Right lobe of liver (tissue), 6 donors: ENCODE measurements at regions of chr11 and their contacts with region 1.

Region 1: GRCh38 chr11:119666463-119667131 is 62.4 kb downstream of the NECTIN1 start:
- DNase-seq: peak; percentile 84 to 87 (median 86)
- ATAC-seq: peak; percentile 97 to 99 (median 99)
- H3K4me3 ChIP-seq: no peak overlapping the region
- H3K27ac ChIP-seq: no peak overlapping the region
- H3K4me1 ChIP-seq: no peaks in the 10 kb centered on the region
- H3K27me3 ChIP-seq: no peaks in the 10 kb centered on the region
- CTCF ChIP-seq: peak; percentile 95 to 99 (median 98)
- POLR2A ChIP-seq: no peak

Region 2: GRCh38 chr11:119481021-119481666 is 185.5 kb before region 1 on chr11:
- intact Hi-C with region 1: loop called in 1 of 2 experiments (anchors 10 kb)
- DNase-seq: peak; percentile 80 to 84 (median 82)
- ATAC-seq: peak; percentile 93 to 99 (median 96)
- H3K4me3 ChIP-seq: no peak overlapping the region
- H3K27ac ChIP-seq: no peak overlapping the region
- H3K4me1 ChIP-seq: peaks cover 0 to 3% (median 0%) of the 10 kb centered on the region in 4 donors
- H3K27me3 ChIP-seq: no peaks in the 10 kb centered on the region
- CTCF ChIP-seq: peak in 3 of 4 donors; percentile 97 to 99 (median 99)
- POLR2A ChIP-seq: no peak

Region 3: DNA sequence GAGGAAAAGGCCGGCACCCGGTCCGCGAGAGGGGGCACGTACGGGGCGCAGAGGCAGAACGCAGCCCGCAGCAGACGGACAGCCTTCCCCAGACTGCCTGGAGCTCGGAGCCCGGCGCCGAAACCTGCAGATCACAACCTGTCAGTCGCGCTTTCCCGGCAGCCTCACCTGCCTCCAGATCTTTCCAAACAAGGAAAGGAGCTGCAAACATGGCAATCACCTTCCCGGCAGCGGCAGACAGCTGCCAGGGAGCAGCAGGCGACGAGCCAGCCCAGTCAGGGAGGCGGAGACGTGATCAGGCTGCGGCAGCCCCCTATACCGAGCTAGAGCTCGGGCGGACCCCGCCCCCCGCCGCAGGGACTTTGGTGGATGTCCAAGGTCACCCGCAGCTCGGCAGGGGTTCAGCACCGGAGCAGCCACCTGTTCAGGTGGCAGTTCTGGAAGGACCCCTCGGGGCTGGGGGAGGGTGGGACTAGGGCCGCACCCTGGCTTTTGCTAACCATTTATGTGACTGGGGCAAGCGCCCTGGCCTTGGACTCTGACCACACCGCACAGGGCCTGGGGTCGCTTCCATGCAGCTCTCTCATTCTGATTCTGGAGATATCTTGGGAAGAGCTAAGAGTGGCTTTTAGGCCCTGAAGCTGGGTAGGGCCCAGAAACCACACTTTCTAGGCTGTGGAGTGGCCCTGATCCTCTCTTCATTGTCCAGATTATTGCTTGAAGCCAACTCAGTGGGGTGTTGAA is 81.4 kb before region 1 on chr11:
- intact Hi-C with region 1: no loop called
- DNase-seq: peak in 2 of 3 donors; percentile 44 to 59
- ATAC-seq: peak; percentile 29 to 69 (median 54)
- H3K4me3 ChIP-seq: peak overlapping the region; percentile 23 to 37 (median 25)
- H3K27ac ChIP-seq: no peak overlapping the region
- H3K4me1 ChIP-seq: peaks cover 0 to 13% (median 0%) of the 10 kb centered on the region in 4 donors
- H3K27me3 ChIP-seq: no peaks in the 10 kb centered on the region
- CTCF ChIP-seq: no peak
- POLR2A ChIP-seq: no peak

Region 4: GRCh38 chr11:119728651-119729580 is 62.3 kb after region 1 on chr11 and contains the start of gene NECTIN1:
- intact Hi-C with region 1: loop called (anchors 5 kb)
- DNase-seq: peak; percentile 90 to 92 (median 91)
- ATAC-seq: peak; percentile 83 to 91 (median 88)
- H3K4me3 ChIP-seq: peak within 1 kb of the TSS; percentile 66 to 80 (median 80)
- H3K27ac ChIP-seq: peak within 1 kb of the TSS; percentile 45 to 72 (median 71)
- H3K4me1 ChIP-seq: peaks cover 0 to 17% (median 5%) of the 10 kb centered on the region in 4 donors
- H3K27me3 ChIP-seq: no peaks in the 10 kb centered on the region
- CTCF ChIP-seq: peak; percentile 93 to 98 (median 96)
- POLR2A ChIP-seq: peak; percentile 95
- total RNA-seq, gene NECTIN1: 4.3 to 8.4 (median 6.1) TPM

Region 5: GRCh38 chr11:120108154-120108865 is 441.7 kb after region 1 on chr11:
- intact Hi-C with region 1: loop called (anchors 5 to 10 kb)
- DNase-seq: peak; percentile 71 to 74 (median 74)
- ATAC-seq: peak; percentile 89 to 98 (median 93)
- H3K4me3 ChIP-seq: no peak overlapping the region
- H3K27ac ChIP-seq: no peak overlapping the region
- H3K4me1 ChIP-seq: no peaks in the 10 kb centered on the region
- H3K27me3 ChIP-seq: no peaks in the 10 kb centered on the region
- CTCF ChIP-seq: peak; percentile 98 to 100 (median 99)
- POLR2A ChIP-seq: no peak